ENCODE measurements at regions of chr22 and their contacts with region 1.

Region 1: GRCh38 chr22:50641696-50642607 is 14.0 kb upstream of the ARSA start:
- DNase-seq: peak; percentile 77
- ATAC-seq: peak; percentile 97
- H3K4me3 Mint-ChIP-seq: peak overlapping the region; percentile 43
- H3K27ac Mint-ChIP-seq: peak overlapping the region; percentile 70
- H3K4me1 Mint-ChIP-seq: peaks cover 23% of the 10 kb centered on the region
- H3K27me3 Mint-ChIP-seq: peaks cover 3% of the 10 kb centered on the region; the same call in 1 of the 2 replicates
- CTCF ChIP-seq: no peak

Region 2: DNA sequence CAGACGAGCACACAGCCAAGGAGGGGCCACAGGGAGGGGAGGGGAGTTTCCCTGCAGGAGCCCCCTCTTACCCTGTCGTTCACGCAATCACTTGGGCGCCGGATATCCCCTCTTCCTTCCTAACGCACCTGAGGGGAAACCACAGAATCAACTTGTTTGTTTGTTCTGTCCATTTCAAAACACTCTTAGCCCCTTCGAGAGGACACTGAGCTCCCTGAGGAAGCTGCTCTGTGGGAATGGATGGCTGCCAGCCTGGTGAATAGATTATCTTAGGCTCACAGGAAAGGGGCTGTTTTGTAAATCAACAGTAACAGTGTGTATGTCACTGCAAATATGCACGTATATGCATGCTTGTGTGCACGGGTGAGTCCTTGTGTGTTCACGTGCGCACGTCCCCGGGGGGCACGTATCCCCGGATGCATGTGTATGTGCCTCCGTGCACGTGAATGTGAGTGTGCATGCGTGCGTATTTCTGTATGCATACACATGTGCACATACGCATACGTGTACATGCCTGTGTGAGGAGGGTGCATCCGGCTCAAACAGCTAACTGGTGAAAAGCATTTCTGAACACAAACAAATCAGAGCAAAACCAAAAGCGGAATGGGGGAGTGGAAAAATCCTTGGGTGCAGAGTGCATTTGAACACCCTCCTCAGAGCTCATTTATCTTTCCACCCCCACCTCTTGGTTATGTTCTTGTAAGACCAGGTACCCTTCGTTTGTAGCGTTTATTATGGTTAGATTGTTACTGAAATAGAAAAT is 21.2 kb before region 1 on chr22:
- CTCF ChIA-PET with region 1: interaction called, 59 read pairs
- POLR2A ChIA-PET with region 1: no interaction called
- DNase-seq: peak; percentile 92
- ATAC-seq: peak; percentile 93
- H3K4me3 Mint-ChIP-seq: peak overlapping the region; percentile 57
- H3K27ac Mint-ChIP-seq: no peak overlapping the region
- H3K4me1 Mint-ChIP-seq: peaks cover 24% of the 10 kb centered on the region
- H3K27me3 Mint-ChIP-seq: peaks cover 16% of the 10 kb centered on the region; the same call in 1 of the 2 replicates
- CTCF ChIP-seq: no peak; the same call in 1 of the 2 replicates

Region 3: GRCh38 chr22:50627642-50628542 is 14.1 kb before region 1 on chr22 and contains the start of gene ARSA:
- CTCF ChIA-PET with region 1: interaction called, 59 read pairs
- POLR2A ChIA-PET with region 1: interaction called, 12 read pairs
- DNase-seq: peak; percentile 82
- ATAC-seq: peak; percentile 83
- H3K4me3 Mint-ChIP-seq: peak within 1 kb of the TSS; percentile 80
- H3K27ac Mint-ChIP-seq: no peak within 1 kb of the TSS
- H3K4me1 Mint-ChIP-seq: peaks cover 7% of the 10 kb centered on the region
- H3K27me3 Mint-ChIP-seq: peaks cover 18% of the 10 kb centered on the region
- CTCF ChIP-seq: no peak
- total RNA-seq, gene ARSA: 17.7 to 18.8 TPM (median 17.8 TPM) in 3 replicates

Region 4: DNA sequence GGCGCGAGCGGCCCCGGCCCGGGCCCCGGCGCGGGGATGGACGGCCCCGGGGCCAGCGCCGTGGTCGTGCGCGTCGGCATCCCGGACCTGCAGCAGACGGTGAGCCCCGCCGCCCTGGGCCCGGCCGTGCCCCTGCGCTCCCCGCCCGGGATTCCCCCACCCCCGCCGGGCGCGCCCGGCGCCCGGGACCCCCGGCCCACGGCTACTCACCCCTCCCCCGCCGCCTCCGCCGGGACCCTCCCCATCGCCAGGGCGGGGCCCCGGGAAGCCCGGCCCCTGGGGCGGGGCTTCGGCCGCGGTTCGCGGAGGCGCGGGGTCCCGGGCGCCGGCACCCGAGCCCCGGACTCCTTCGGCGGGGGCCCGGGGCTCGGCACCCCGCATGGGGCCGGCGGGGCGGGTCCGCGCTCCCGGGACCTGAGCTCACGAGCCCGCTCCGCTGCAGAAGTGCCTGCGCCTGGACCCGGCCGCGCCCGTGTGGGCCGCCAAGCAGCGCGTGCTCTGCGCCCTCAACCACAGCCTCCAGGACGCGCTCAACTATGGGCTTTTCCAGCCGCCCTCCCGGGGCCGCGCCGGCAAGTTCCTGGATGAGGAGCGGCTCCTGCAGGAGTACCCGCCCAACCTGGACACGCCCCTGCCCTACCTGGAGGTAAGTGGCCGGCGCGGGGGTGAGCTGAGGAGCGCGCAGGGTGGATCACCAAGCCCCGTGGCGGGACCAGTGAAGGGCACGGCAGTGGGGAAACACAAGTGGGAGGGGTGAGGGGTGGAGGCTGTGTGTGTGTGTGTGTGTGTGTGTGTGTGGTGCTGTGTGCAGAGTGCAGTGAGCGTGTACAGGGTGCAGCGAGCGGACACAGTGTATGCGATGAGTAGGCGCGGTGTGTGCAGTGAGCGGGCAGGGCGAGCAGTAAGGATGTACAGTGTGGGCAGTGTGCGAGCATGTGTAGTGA is 32.9 kb after region 1 on chr22:
- CTCF ChIA-PET with region 1: interaction called, 22 read pairs
- POLR2A ChIA-PET with region 1: no interaction called
- DNase-seq: peak; percentile 90
- ATAC-seq: peak; percentile 89
- H3K4me3 Mint-ChIP-seq: peak overlapping the region; percentile 60
- H3K27ac Mint-ChIP-seq: no peak overlapping the region
- H3K4me1 Mint-ChIP-seq: peaks cover 13% of the 10 kb centered on the region
- H3K27me3 Mint-ChIP-seq: peaks cover 46% of the 10 kb centered on the region
- CTCF ChIP-seq: no peak